CD4-positive, alpha-beta memory T cell (primary cell): ENCODE measurements at regions of chr12 and their contacts with region 1.

Region 1: DNA sequence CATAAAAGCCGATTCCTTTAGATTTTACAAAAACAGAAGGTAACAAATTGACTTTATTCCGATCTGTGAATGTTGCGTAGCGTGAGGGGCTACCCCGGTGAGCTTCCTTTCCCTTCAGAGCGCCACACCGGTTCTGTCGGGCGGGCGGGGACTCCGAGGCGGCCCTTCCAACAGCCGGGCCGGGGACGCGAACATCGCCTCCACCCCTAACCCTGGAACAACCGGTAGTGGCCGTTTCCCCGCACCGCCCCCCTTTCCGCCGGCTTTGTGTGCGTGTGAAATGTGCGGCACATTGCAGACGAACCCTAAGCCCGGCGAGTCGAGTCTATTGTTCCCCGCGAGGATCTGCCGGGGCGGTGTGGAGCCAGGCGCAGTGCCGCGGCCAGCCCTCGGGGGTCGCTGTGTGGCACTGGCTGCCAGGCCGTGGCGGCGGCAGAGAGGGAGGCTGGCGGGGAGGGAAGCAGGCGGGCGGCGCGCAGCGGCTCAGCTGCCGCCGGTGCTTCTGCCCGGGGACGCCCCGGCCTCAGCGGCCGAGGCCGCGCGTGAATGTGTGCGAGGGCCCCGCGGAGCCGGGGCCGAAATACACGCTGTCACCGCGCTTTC is 775 bp upstream of the ARID2 start:
- DNase-seq: peak; percentile 97 to 98 (median 98)
- H3K4me3 ChIP-seq: peak overlapping the region; percentile 78 to 89
- H3K4me3 Mint-ChIP-seq: peak overlapping the region; percentile 92 to 100 (median 100)
- H3K27ac ChIP-seq: peak overlapping the region; percentile 98
- H3K27ac Mint-ChIP-seq: peak overlapping the region; percentile 87 to 99 (median 99)
- H3K4me1 ChIP-seq: peaks cover 41% of the 10 kb centered on the region
- H3K4me1 Mint-ChIP-seq: peaks cover 18 to 56% (median 24%) of the 10 kb centered on the region in 4 donors
- H3K27me3 ChIP-seq: no peaks in the 10 kb centered on the region
- H3K27me3 Mint-ChIP-seq: no peaks in the 10 kb centered on the region

Region 2: GRCh38 chr12:45170456-45171042 is 558.2 kb before region 1 on chr12:
- CTCF ChIA-PET with region 1: no interaction called
- POLR2A ChIA-PET with region 1: no interaction called
- intact Hi-C with region 1: loop called (anchors 2 kb)
- DNase-seq: peak; percentile 58 to 66 (median 63)
- H3K4me3 ChIP-seq: no peak overlapping the region
- H3K4me3 Mint-ChIP-seq: no peak overlapping the region
- H3K27ac ChIP-seq: no peak overlapping the region
- H3K27ac Mint-ChIP-seq: peak overlapping the region in 1 of 7 donors; percentile 7
- H3K4me1 ChIP-seq: no peaks in the 10 kb centered on the region
- H3K4me1 Mint-ChIP-seq: no peaks in the 10 kb centered on the region
- H3K27me3 ChIP-seq: no peaks in the 10 kb centered on the region
- H3K27me3 Mint-ChIP-seq: peaks cover 0 to 1% of the 10 kb centered on the region in 2 donors

Region 3: GRCh38 chr12:45543906-45544315 is 184.8 kb before region 1 on chr12:
- CTCF ChIA-PET with region 1: interaction called, 61 read pairs
- POLR2A ChIA-PET with region 1: interaction called, 24 read pairs
- intact Hi-C with region 1: loop called (anchors 1 kb)
- DNase-seq: peak; percentile 58 to 70 (median 64)
- H3K4me3 ChIP-seq: no peak overlapping the region
- H3K4me3 Mint-ChIP-seq: no peak overlapping the region
- H3K27ac ChIP-seq: no peak overlapping the region
- H3K27ac Mint-ChIP-seq: no peak overlapping the region
- H3K4me1 ChIP-seq: no peaks in the 10 kb centered on the region
- H3K4me1 Mint-ChIP-seq: peaks cover 0 to 6% (median 2%) of the 10 kb centered on the region in 4 donors
- H3K27me3 ChIP-seq: no peaks in the 10 kb centered on the region
- H3K27me3 Mint-ChIP-seq: peaks cover 0 to 1% of the 10 kb centered on the region in 2 donors

Region 4: GRCh38 chr12:45601888-45602287 is 126.8 kb before region 1 on chr12:
- CTCF ChIA-PET with region 1: no interaction called
- POLR2A ChIA-PET with region 1: no interaction called
- intact Hi-C with region 1: no loop called
- DNase-seq: no peak
- H3K4me3 ChIP-seq: no peak overlapping the region
- H3K4me3 Mint-ChIP-seq: no peak overlapping the region
- H3K27ac ChIP-seq: no peak overlapping the region
- H3K27ac Mint-ChIP-seq: no peak overlapping the region
- H3K4me1 ChIP-seq: no peaks in the 10 kb centered on the region
- H3K4me1 Mint-ChIP-seq: no peaks in the 10 kb centered on the region
- H3K27me3 ChIP-seq: no peaks in the 10 kb centered on the region
- H3K27me3 Mint-ChIP-seq: peaks cover 0 to 3% of the 10 kb centered on the region in 2 donors

Region 5: GRCh38 chr12:45670346-45671065 is 58.2 kb before region 1 on chr12:
- CTCF ChIA-PET with region 1: interaction called, 41 read pairs
- POLR2A ChIA-PET with region 1: interaction called, 99 read pairs
- intact Hi-C with region 1: loop called (anchors 1 kb)
- DNase-seq: peak; percentile 30 to 61 (median 44)
- H3K4me3 ChIP-seq: peak overlapping the region in 1 of 2 donors; percentile 2
- H3K4me3 Mint-ChIP-seq: peak overlapping the region in 6 of 8 donors; percentile 15 to 62 (median 42)
- H3K27ac ChIP-seq: no peak overlapping the region
- H3K27ac Mint-ChIP-seq: peak overlapping the region in 2 of 7 donors; percentile 17 to 48
- H3K4me1 ChIP-seq: peaks cover 32% of the 10 kb centered on the region
- H3K4me1 Mint-ChIP-seq: peaks cover 21 to 39% (median 27%) of the 10 kb centered on the region in 4 donors
- H3K27me3 ChIP-seq: no peaks in the 10 kb centered on the region
- H3K27me3 Mint-ChIP-seq: no peaks in the 10 kb centered on the region

Region 6: DNA sequence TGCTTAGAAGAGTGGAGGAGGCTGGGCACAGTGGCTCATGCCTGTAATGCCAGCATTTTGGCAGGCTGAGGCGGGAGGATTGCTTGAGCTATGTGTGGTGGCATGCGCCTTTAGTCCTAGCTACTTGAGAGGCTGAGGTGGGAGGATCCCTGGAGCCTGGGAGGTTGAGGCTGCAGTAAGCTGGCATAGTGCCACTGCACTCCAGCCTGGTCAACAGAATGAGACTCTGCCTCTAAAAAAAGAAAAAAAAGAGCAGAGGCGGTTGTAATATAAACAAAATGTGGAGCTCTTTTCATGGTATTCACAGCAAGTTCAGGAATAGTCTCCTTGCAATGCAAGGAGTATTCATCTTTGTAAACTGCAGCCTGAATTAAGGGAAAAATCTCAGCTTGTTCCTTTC is 27.9 kb after region 1 on chr12:
- CTCF ChIA-PET with region 1: interaction called, 6 read pairs
- POLR2A ChIA-PET with region 1: interaction called, 10 read pairs
- intact Hi-C with region 1: no loop called
- DNase-seq: no peak
- H3K4me3 ChIP-seq: no peak overlapping the region
- H3K4me3 Mint-ChIP-seq: no peak overlapping the region
- H3K27ac ChIP-seq: no peak overlapping the region
- H3K27ac Mint-ChIP-seq: peak overlapping the region in 3 of 7 donors; percentile 4 to 39 (median 8)
- H3K4me1 ChIP-seq: peaks cover 24% of the 10 kb centered on the region
- H3K4me1 Mint-ChIP-seq: peaks cover 38 to 81% (median 61%) of the 10 kb centered on the region in 4 donors
- H3K27me3 ChIP-seq: no peaks in the 10 kb centered on the region
- H3K27me3 Mint-ChIP-seq: no peaks in the 10 kb centered on the region

Region 7: GRCh38 chr12:46217541-46218321 is 489.0 kb after region 1 on chr12:
- CTCF ChIA-PET with region 1: no interaction called
- POLR2A ChIA-PET with region 1: interaction called, 4 read pairs
- intact Hi-C with region 1: loop called (anchors 2 kb)
- DNase-seq: peak; percentile 76 to 85 (median 81)
- H3K4me3 ChIP-seq: peak overlapping the region; percentile 42 to 56
- H3K4me3 Mint-ChIP-seq: peak overlapping the region; percentile 78 to 90 (median 84)
- H3K27ac ChIP-seq: peak overlapping the region; percentile 87
- H3K27ac Mint-ChIP-seq: peak overlapping the region; percentile 96 to 100 (median 98)
- H3K4me1 ChIP-seq: peaks cover 99% of the 10 kb centered on the region
- H3K4me1 Mint-ChIP-seq: peaks cover 88 to 98% (median 93%) of the 10 kb centered on the region in 4 donors
- H3K27me3 ChIP-seq: no peaks in the 10 kb centered on the region
- H3K27me3 Mint-ChIP-seq: no peaks in the 10 kb centered on the region